GM12878 (cell line): ENCODE measurements at regions of chr11 and their contacts with region 1.

Region 1: DNA sequence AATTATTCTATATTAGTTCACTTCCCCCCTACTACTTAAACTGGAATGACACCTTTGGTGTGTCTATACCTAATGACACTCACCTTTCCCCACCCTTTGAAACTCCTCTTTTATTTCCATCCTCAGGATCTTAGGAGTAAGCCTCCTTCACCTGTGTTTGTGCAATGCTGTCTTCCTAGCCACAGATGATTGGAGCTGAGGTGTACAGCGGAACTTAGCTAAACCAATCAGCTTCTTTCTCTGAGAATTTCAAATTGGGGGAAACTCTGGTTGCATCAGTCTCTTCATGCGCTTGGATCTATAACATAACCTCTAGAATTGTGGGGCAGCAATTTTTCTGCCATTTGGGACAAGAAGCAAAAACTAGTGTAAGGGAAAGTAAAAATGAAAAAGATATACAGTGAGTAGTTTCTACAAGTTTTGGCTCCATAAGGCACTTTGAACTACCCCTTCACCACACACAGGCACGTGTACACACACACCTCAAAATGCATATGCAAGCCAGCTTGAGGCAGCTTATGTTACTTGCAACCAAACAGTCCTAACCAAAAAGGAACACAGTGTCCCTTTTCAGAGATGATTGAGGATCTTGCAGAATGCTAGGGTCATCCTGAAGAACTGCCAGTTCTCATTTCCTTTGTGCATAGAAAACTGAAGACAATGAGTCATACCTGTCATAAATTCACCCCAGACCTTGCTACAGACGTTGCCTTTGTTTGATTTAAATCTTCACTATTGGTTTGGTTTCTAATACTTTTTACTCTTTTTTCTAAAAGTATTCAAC is 36.0 kb upstream of the LDLRAD3 start:
- DNase-seq: peak; percentile 64
- ATAC-seq: peak; percentile 73
- H3K4me3 ChIP-seq: no peak overlapping the region
- H3K27ac ChIP-seq: no peak overlapping the region
- H3K4me1 ChIP-seq: peaks cover 33% of the 10 kb centered on the region
- H3K27me3 ChIP-seq: no peaks in the 10 kb centered on the region
- CTCF ChIP-seq: no peak
- EP300 ChIP-seq: peak; percentile 58 to 68; a peak in 2 of 4 replicates
- POLR2A ChIP-seq: no peak
- RAD21 ChIP-seq: no peak; the same call in 1 of the 2 replicates

Region 2: GRCh38 chr11:35969089-35970042 is 61.5 kb after region 1 on chr11:
- CTCF ChIA-PET with region 1: no interaction called
- POLR2A ChIA-PET with region 1: no interaction called
- RAD21 ChIA-PET with region 1: interaction called, 3 read pairs
- SMC1A ChIA-PET with region 1: no interaction called
- in situ Hi-C with region 1: no loop called
- intact Hi-C with region 1: loop called (anchors 5 kb)
- DNase-seq: no peak
- ATAC-seq: peak; percentile 67
- H3K4me3 ChIP-seq: no peak overlapping the region
- H3K27ac ChIP-seq: no peak overlapping the region
- H3K4me1 ChIP-seq: peaks cover 7% of the 10 kb centered on the region
- H3K27me3 ChIP-seq: no peaks in the 10 kb centered on the region
- CTCF ChIP-seq: no peak
- EP300 ChIP-seq: no peak
- POLR2A ChIP-seq: no peak
- RAD21 ChIP-seq: no peak